ENCODE measurements at regions of chr17 and their contacts with region 1.

Region 1: GRCh38 chr17:49343273-49343672 is 18.8 kb downstream of the ZNF652 start:
- DNase-seq: peak in 1 of 5 donors; percentile 22
- H3K4me3 ChIP-seq: peak overlapping the region; percentile 50
- H3K4me3 Mint-ChIP-seq: peak overlapping the region; percentile 54 to 91 (median 73)
- H3K27ac ChIP-seq: no peak overlapping the region
- H3K27ac Mint-ChIP-seq: peak overlapping the region; percentile 67 to 99 (median 78)
- H3K4me1 ChIP-seq: peaks cover 70% of the 10 kb centered on the region
- H3K4me1 Mint-ChIP-seq: peaks cover 60 to 87% (median 84%) of the 10 kb centered on the region in 3 donors
- H3K27me3 ChIP-seq: no peaks in the 10 kb centered on the region
- H3K27me3 Mint-ChIP-seq: no peaks in the 10 kb centered on the region

Region 2: DNA sequence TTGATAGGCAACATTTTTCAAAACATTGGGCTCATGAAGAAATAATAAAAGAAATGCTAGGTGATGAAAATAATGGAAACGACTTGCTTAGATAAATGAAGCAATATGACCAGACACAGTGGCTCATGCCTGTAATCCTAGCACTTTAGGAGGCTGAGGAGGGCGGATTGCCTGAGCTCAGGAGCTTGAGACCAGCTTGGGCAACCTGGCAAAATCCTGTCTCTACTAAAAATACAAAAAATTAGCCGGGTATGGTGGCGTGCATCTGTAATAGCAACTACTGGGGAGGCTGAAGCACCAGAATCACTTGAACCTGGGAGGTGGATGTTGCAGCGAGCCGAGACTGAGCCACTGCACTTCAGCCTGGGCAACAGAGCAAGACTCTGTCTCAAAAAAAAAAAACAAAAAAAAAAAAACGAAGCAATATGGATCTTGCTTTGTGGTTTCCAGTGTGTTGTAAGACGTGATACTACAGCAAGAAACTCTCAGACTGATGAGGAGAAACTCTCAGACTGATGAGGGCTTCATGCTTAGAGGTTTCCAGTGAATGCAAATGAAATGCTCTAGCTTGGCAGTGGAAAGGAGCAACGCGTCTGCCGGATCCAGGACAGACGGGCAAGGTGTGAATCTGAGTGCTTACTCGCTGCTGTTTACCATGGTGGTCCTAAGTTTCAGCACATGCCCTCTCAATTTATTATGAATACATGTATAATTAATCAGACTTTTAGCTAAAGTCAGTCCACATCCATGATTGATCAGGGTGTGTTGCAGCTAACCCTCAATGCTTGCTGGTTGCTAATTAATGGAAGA is 357.6 kb before region 1 on chr17:
- CTCF ChIA-PET with region 1: no interaction called
- POLR2A ChIA-PET with region 1: no interaction called
- DNase-seq: no peak
- H3K4me3 ChIP-seq: no peak overlapping the region
- H3K4me3 Mint-ChIP-seq: no peak overlapping the region
- H3K27ac ChIP-seq: no peak overlapping the region
- H3K27ac Mint-ChIP-seq: no peak overlapping the region
- H3K4me1 ChIP-seq: no peaks in the 10 kb centered on the region
- H3K4me1 Mint-ChIP-seq: no peaks in the 10 kb centered on the region
- H3K27me3 ChIP-seq: no peaks in the 10 kb centered on the region
- H3K27me3 Mint-ChIP-seq: peaks cover 16 to 34% of the 10 kb centered on the region in 2 donors

Region 3: DNA sequence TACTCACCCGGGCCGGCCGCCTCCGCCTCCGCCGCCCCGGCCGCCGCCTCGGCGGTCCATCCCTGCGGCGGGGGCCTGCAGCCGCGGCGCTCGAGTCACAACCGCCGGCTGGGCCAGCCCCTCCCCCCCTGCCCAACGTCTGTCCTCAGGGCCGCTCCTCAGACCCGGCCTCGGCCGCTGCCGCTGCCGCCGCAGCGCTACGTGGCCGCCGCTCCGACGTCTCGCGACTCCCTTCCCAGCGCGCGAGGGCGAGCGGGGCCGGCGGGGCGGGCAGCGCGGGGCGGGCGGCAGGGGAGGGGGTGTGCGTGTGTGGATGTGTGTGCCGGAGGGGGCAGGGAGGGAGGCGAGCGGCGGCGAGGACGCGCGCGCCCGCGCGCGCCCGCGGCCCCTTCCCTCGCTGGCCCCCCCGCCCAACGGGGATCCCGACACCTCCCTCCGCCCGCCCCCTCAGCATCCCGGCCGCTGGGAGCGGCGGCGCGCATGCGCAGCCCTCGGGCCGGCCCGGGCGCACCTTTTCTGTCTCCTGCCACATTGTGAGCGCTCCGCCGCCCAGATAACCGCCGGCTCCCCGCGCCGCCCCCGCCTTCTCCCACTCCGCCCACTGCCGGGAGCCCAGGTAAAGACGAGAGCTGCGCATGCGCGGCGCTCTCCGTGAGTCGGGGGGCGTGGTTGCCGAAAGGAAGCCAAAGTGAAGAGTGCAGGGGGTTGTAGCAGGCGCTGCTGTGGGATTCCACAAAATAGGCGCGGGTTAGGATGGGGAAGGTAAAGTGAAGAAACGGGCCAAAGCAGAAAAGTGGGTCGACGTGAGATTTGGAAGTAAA is 18.8 kb after region 1 on chr17 and contains the start of gene ZNF652:
- CTCF ChIA-PET with region 1: interaction called, 24 read pairs
- POLR2A ChIA-PET with region 1: interaction called, 18 read pairs
- DNase-seq: peak; percentile 88 to 98 (median 96)
- H3K4me3 ChIP-seq: peak within 1 kb of the TSS; percentile 70
- H3K4me3 Mint-ChIP-seq: peak within 1 kb of the TSS; percentile 92 to 99 (median 95)
- H3K27ac ChIP-seq: peak within 1 kb of the TSS; percentile 56
- H3K27ac Mint-ChIP-seq: peak within 1 kb of the TSS; percentile 94 to 100 (median 98)
- H3K4me1 ChIP-seq: peaks cover 55% of the 10 kb centered on the region
- H3K4me1 Mint-ChIP-seq: peaks cover 61 to 69% (median 65%) of the 10 kb centered on the region in 3 donors
- H3K27me3 ChIP-seq: no peaks in the 10 kb centered on the region
- H3K27me3 Mint-ChIP-seq: peaks cover 0 to 2% of the 10 kb centered on the region in 2 donors
- total RNA-seq, gene ZNF652: 11.5 to 11.9 TPM

Region 4: GRCh38 chr17:49370971-49371834 is 27.9 kb after region 1 on chr17:
- CTCF ChIA-PET with region 1: interaction called, 17 read pairs
- POLR2A ChIA-PET with region 1: interaction called, 4 read pairs
- DNase-seq: no peak
- H3K4me3 ChIP-seq: no peak overlapping the region
- H3K4me3 Mint-ChIP-seq: no peak overlapping the region
- H3K27ac ChIP-seq: no peak overlapping the region
- H3K27ac Mint-ChIP-seq: peak overlapping the region in 1 of 8 donors; percentile 26
- H3K4me1 ChIP-seq: no peaks in the 10 kb centered on the region
- H3K4me1 Mint-ChIP-seq: peaks cover 13 to 20% (median 14%) of the 10 kb centered on the region in 3 donors
- H3K27me3 ChIP-seq: no peaks in the 10 kb centered on the region
- H3K27me3 Mint-ChIP-seq: no peaks in the 10 kb centered on the region